ENCODE measurements at regions of chr1 and their contacts with region 1.

Region 1: DNA sequence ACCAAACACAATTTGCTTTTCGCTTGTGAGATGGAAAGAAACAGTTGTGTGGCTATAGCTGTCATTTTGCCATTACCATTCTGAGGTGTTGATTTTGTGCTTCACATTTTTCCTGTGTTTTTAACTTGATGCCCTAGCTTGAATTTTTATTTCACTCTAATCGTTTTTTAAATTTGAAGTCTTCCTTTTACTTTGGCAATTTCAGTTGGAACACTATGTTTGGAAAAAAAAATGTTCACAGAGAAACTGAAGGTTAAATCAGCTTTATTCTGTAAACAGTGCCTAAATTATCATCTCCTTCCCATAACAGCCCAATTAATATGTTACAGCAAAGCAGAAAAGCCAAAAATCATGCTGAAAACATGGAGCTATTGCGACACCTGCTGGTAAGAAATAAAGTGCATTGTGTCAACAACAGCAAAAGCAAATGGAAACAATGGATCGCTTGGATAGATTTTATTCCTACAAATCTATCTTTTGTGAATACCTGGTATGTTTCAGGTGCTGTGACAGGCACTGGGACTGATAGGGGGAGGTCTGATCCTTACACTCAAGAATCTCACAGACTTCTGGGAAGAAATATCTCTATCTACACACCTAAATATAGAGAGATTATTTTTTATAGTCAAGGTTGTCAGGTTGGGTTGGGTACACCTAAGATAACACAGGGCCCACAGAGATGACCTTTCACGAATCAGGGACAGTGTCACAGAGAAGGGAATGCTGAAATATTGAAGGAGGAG is 16.2 kb upstream of the ERICH3 start:
- DNase-seq: peak; percentile 63
- H3K4me3 ChIP-seq: no peak overlapping the region
- H3K27ac ChIP-seq: no peak overlapping the region
- H3K4me1 ChIP-seq: no peaks in the 10 kb centered on the region
- H3K27me3 ChIP-seq: no peaks in the 10 kb centered on the region
- CTCF ChIP-seq: peak; percentile 56 to 67
- POLR2A ChIP-seq: no peak

Region 2: DNA sequence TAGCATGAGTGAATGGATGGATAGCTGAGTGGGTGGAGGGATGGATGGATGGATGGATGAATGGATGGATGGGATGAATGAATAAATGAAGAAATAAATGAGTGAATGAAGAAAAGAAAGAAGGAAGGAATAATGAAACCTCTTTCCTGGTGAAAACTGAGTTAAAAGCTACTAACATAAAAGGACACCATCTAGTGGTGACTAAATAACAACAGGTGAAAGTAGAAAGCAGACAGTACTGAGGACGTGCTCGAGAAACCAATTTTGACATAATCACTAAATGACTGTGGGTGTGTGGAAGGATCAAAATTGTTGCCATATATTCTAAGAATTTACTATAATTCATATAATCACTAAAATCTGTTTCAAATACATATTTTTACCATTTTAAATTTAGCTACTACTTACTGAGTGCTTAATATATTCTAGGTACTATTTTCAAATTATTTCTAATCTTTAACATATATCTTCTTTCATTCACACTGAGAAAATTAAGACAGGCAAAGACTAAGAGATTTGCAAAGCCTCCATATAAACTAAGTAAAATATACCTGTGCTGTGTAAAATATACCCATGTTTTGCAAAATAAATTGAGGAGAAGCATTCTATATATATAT is 1014.7 kb before region 1 on chr1:
- CTCF ChIA-PET with region 1: interaction called, 3 read pairs
- POLR2A ChIA-PET with region 1: no interaction called
- dilution Hi-C with region 1: no loop called
- intact Hi-C with region 1: loop called (anchors 10 kb)
- DNase-seq: peak; percentile 28
- H3K4me3 ChIP-seq: no peak overlapping the region
- H3K27ac ChIP-seq: no peak overlapping the region
- H3K4me1 ChIP-seq: no peaks in the 10 kb centered on the region
- H3K27me3 ChIP-seq: no peaks in the 10 kb centered on the region
- CTCF ChIP-seq: peak; percentile 22 to 39
- POLR2A ChIP-seq: no peak

Region 3: GRCh38 chr1:73998348-73998959 is 691.3 kb before region 1 on chr1:
- CTCF ChIA-PET with region 1: no interaction called
- POLR2A ChIA-PET with region 1: no interaction called
- dilution Hi-C with region 1: no loop called
- intact Hi-C with region 1: loop called (anchors 2 kb)
- DNase-seq: peak; percentile 38
- H3K4me3 ChIP-seq: no peak overlapping the region
- H3K27ac ChIP-seq: no peak overlapping the region
- H3K4me1 ChIP-seq: no peaks in the 10 kb centered on the region
- H3K27me3 ChIP-seq: no peaks in the 10 kb centered on the region
- CTCF ChIP-seq: peak; percentile 7 to 11
- POLR2A ChIP-seq: no peak

Region 4: DNA sequence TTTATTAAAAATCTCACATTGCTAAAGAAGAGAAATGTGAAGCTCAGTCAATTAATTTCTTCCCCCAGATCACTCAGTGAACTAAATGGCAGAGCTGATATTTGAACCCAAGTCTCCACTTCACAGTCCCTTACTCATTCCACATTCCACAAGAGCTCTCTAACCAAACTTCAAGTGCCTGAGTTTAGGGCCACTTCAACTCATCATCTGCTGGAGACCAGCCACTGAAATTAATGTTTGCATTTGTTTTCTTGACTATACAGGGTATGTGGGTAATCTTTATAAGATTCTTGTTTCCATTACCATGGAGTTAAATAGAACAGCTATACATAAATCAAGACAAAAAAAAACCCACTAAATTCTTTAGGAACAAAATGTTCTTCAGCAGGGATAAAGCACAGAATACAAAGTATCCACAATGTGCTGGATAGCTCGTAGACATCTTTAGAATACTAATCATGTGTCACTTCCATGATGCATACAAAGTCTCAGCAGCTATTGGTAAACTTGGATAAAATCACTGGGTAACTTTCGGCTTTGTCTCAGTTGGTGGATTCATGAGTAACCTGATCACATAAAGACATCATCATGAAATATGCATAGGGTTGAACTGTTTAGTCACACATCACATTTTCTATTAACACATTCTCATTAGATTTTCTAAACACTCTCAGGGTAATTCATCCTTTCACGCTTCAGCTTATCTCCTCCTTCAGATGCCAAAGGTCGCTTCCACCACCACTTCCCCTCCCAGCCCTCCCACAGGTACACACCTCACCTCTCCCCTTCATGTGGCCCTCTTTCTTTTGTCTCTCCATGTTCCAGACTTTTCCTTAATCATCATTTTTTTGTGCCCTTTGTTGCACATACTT is 267.1 kb before region 1 on chr1:
- CTCF ChIA-PET with region 1: no interaction called
- POLR2A ChIA-PET with region 1: no interaction called
- dilution Hi-C with region 1: no loop called
- intact Hi-C with region 1: no loop called
- DNase-seq: no peak
- H3K4me3 ChIP-seq: no peak overlapping the region
- H3K27ac ChIP-seq: no peak overlapping the region
- H3K4me1 ChIP-seq: no peaks in the 10 kb centered on the region
- H3K27me3 ChIP-seq: no peaks in the 10 kb centered on the region
- CTCF ChIP-seq: no peak
- POLR2A ChIP-seq: no peak

Region 5: DNA sequence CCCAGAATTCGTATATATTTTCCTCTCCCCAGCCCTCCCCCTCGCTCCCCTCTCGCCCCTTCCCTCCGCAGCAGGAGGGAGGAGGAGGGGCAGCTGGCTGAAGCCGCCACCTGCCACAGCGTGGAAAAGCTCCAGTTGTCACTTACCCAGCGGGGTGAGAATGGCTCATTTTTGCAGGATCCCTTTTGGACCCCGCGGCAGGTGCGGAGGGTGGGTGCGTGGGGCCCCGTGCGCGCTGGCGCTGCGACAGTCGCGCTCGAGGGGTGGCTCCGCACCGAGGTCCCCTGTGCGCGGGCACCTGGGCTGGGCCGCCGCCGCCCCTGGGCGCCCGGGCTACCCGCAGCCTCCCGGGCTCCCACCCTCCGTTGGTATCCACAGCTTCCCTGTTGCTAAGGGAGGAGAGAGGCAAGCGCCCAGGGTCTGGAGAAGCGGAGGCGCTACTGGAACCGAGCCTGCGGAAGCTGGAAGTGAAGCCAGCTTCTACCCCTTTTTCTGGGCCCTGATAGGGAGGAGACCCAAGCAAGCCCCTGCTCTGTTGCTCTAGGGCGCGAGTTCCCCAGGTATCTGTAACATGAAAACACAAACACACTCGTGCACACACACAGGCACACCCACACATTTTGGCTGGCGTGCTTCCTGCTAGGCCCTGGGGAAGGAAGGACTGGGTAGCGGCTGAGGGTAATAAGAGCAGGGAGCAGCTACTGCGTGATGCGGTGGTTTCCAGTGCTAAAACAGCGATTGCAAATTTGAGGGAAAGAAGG is 16.3 kb before region 1 on chr1 and contains the start of gene ERICH3:
- CTCF ChIA-PET with region 1: interaction called, 12 read pairs
- POLR2A ChIA-PET with region 1: no interaction called
- dilution Hi-C with region 1: no loop called
- intact Hi-C with region 1: no loop called
- DNase-seq: no peak
- H3K4me3 ChIP-seq: peak within 1 kb of the TSS in 1 of 3 experiments; percentile 4
- H3K27ac ChIP-seq: no peak within 1 kb of the TSS
- H3K4me1 ChIP-seq: no peaks in the 10 kb centered on the region
- H3K27me3 ChIP-seq: peaks cover 8 to 19% of the 10 kb centered on the region in 2 experiments
- CTCF ChIP-seq: no peak
- POLR2A ChIP-seq: no peak
- total RNA-seq, gene ERICH3: not detected in 2 replicates

Region 6: DNA sequence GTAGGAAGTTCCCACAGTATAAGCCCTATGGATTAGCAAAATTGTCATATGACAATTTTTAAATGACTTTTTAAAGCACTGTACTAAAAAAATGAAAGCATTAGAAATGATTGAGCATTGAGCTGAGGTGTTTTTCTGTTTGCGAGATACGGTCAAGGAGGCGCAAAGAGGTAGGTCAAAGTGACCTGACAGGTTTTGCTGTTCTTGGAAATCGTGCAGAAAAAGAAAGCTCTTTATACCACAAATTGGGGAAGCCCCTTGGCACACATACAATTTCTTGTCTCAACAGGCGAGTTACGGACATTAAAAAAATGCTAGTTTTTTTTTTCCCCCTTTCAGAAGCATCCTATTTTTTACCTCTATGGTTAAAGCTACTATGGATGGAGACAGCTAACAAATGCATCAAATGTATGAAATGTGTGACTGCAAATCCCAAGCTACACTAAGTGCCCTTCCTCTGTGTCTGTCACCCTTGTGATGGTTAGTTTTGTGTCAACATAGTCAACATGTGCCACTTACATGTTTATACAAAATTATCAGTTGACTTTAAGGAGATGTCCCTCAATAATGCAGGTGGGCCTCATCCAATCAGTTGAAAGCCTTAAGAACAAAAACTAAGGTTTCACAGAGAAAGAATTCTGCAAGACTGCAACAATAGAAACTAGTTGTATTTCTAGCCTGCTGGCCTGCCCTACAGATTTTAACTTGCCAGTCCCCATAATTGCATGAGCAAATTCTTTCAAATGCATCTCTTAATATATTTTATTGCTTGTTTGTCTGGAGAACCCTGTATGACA is 13.8 kb after region 1 on chr1:
- CTCF ChIA-PET with region 1: interaction called, 35 read pairs
- POLR2A ChIA-PET with region 1: no interaction called
- dilution Hi-C with region 1: no loop called
- intact Hi-C with region 1: no loop called
- DNase-seq: no peak
- H3K4me3 ChIP-seq: no peak overlapping the region
- H3K27ac ChIP-seq: no peak overlapping the region
- H3K4me1 ChIP-seq: no peaks in the 10 kb centered on the region
- H3K27me3 ChIP-seq: no peaks in the 10 kb centered on the region
- CTCF ChIP-seq: no peak
- POLR2A ChIP-seq: no peak

Region 7: DNA sequence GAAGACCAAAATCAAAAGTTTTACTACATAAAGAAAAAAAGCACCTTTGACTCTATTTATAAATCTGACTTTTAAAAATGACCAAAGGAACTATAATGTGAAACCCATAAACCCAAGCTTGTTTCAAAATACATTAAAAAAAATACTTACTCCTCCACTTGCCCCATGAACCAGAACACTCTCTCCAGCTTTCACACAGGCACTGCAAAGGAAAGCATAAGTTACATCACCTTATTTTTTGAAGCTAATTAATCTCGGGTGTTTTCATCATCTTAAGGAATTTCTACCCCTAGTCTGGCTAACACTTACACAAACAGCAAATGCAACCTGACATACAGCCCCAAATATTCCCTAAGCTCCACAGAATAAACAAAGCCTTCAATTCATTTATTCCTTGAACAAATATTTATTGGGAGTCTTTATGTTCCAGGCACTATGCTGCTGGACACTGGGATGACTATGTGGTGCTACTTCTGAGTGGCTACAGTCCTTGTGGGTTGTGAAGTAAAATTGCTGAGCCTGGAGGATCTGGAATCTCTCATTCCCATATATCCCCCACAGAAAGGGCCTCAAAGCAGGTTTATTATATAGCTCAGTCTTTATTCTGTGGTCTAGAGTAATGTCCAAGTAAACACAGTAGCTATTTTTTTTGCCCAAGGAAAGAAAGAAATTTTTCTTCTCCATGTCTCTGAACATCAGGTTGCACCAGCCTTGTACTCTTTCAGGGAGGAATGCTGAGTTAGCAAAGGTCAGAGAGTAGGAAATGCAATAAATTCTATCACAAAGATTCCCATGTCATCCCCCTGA is 24.8 kb after region 1 on chr1:
- CTCF ChIA-PET with region 1: interaction called, 12 read pairs
- POLR2A ChIA-PET with region 1: no interaction called
- dilution Hi-C with region 1: no loop called
- intact Hi-C with region 1: no loop called
- DNase-seq: no peak
- H3K4me3 ChIP-seq: no peak overlapping the region
- H3K27ac ChIP-seq: no peak overlapping the region
- H3K4me1 ChIP-seq: peaks cover 6% of the 10 kb centered on the region
- H3K27me3 ChIP-seq: no peaks in the 10 kb centered on the region
- CTCF ChIP-seq: no peak
- POLR2A ChIP-seq: no peak

Measured in endothelial cell of umbilical vein (primary cell).